CD14-positive monocyte (primary cell): ENCODE measurements at regions of chr4 and their contacts with region 1.

Region 1: DNA sequence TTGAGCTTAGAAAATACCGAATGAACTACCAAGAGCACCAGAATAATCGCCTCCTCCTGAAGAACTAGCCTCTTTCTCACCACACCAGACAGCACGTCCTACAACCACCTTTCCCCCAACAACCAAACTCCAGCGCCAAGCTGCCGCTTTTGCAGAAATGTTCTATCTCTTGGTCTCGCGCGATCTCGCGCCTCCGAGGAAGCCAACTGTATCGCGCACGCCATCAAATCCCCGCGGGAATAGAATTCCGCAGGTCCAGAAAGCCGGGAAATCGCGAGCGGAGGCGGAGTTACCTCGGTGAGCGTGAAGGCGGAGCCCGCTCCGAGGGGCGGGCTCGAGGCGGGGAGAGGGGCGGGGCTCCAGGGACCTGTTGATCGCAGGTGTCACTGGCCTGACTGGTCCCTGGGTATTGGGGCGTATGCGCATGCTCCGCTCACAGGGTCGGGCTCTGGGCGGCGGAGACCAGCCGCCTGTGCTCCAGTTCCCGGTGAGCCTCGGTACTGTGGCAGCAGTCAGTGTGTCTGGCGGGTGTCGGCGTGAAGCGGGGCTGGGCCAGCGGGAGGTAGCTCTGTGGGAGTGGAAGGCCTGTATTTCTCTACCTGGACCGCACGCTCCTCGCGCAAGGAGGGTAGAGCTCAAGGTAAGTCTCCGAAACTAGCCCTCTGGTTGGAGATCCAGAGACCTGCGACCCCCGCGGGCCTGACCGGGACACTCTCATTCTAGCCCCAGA is at the start of gene USP53:
- DNase-seq: peak; percentile 78 to 80 (median 78)
- H3K4me3 ChIP-seq: peak within 1 kb of the TSS; percentile 55 to 84 (median 72)
- H3K4me3 Mint-ChIP-seq: peak within 1 kb of the TSS; percentile 93 to 96
- H3K27ac ChIP-seq: peak within 1 kb of the TSS in 1 of 2 donors; percentile 55
- H3K27ac Mint-ChIP-seq: peak within 1 kb of the TSS; percentile 33 to 86 (median 79)
- H3K4me1 ChIP-seq: peaks cover 15 to 37% of the 10 kb centered on the region in 2 donors
- H3K4me1 Mint-ChIP-seq: peaks cover 34% of the 10 kb centered on the region
- H3K27me3 ChIP-seq: peaks cover 0 to 8% of the 10 kb centered on the region in 2 donors
- H3K27me3 Mint-ChIP-seq: peaks cover 7 to 18% (median 17%) of the 10 kb centered on the region in 3 donors
- CTCF ChIP-seq: no peak
- polyA plus RNA-seq, gene USP53: 0.11 to 0.44 (median 0.22) TPM

Region 2: GRCh38 chr4:119025916-119026661 is 186.3 kb before region 1 on chr4:
- intact Hi-C with region 1: loop called in 1 of 2 experiments (anchors 10 kb)
- DNase-seq: peak; percentile 86 to 93 (median 91)
- H3K4me3 ChIP-seq: peak overlapping the region; percentile 33 to 66 (median 60)
- H3K4me3 Mint-ChIP-seq: peak overlapping the region; percentile 31 to 81
- H3K27ac ChIP-seq: peak overlapping the region; percentile 98 to 99
- H3K27ac Mint-ChIP-seq: peak overlapping the region; percentile 97 to 99 (median 98)
- H3K4me1 ChIP-seq: peaks cover 24 to 34% of the 10 kb centered on the region in 2 donors
- H3K4me1 Mint-ChIP-seq: peaks cover 22% of the 10 kb centered on the region
- H3K27me3 ChIP-seq: no peaks in the 10 kb centered on the region
- H3K27me3 Mint-ChIP-seq: peaks cover 0 to 4% (median 0%) of the 10 kb centered on the region in 3 donors
- CTCF ChIP-seq: no peak

Region 3: GRCh38 chr4:119103263-119103662 is 109.1 kb before region 1 on chr4:
- intact Hi-C with region 1: loop called in 1 of 2 experiments (anchors 10 kb)
- DNase-seq: peak; percentile 78 to 95 (median 89)
- H3K4me3 ChIP-seq: no peak overlapping the region
- H3K4me3 Mint-ChIP-seq: peak overlapping the region in 1 of 2 donors; percentile 26
- H3K27ac ChIP-seq: peak overlapping the region; percentile 22 to 58
- H3K27ac Mint-ChIP-seq: peak overlapping the region in 6 of 7 donors; percentile 79 to 94 (median 90)
- H3K4me1 ChIP-seq: peaks cover 22 to 29% of the 10 kb centered on the region in 2 donors
- H3K4me1 Mint-ChIP-seq: peaks cover 39% of the 10 kb centered on the region
- H3K27me3 ChIP-seq: no peaks in the 10 kb centered on the region
- H3K27me3 Mint-ChIP-seq: peaks cover 0 to 3% (median 3%) of the 10 kb centered on the region in 3 donors
- CTCF ChIP-seq: no peak

Region 4: DNA sequence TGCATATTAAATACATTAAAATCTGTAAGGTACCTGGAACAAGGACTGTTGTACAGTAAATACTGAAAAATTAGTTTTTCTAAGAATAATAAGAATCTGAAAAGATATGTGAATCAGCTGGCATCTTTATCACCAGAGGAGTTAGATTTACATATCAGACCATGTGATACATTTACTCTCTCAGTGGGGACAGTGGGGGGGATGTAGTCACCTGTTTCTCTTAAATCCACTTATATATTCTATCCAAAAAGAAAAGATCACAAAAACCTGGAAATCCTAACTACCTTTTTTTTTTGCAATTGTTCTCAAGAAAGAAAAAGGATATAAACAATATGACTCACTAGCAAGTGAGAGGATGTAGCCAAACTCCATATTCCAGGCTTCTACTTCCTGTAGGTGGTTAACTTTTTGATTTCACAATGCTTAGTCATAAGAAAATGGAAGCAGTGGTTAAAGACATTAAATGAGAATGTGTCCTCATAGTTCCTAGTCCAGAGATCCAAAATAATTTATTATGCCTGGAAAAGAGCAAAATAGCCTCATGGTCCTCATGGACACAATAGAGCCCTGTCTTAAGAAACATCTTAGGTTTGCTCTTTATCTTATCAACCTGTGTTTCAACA is 99.3 kb before region 1 on chr4:
- intact Hi-C with region 1: loop called (anchors 10 kb)
- DNase-seq: peak; percentile 76 to 93 (median 92)
- H3K4me3 ChIP-seq: peak overlapping the region in 1 of 3 experiments; percentile 28
- H3K4me3 Mint-ChIP-seq: no peak overlapping the region
- H3K27ac ChIP-seq: no peak overlapping the region
- H3K27ac Mint-ChIP-seq: peak overlapping the region in 5 of 7 donors; percentile 46 to 88 (median 85)
- H3K4me1 ChIP-seq: peaks cover 10 to 15% of the 10 kb centered on the region in 2 donors
- H3K4me1 Mint-ChIP-seq: peaks cover 13% of the 10 kb centered on the region
- H3K27me3 ChIP-seq: no peaks in the 10 kb centered on the region
- H3K27me3 Mint-ChIP-seq: peaks cover 0 to 3% (median 3%) of the 10 kb centered on the region in 3 donors
- CTCF ChIP-seq: no peak